CD4-positive, alpha-beta T cell (primary cell): ENCODE measurements at regions of chr9 and their contacts with region 1.

Region 1: GRCh38 chr9:99859243-99859980 is 37.7 kb downstream of the NR4A3 start:
- DNase-seq: no peak
- ATAC-seq: no peak
- H3K4me3 ChIP-seq: no peak overlapping the region
- H3K4me3 Mint-ChIP-seq: no peak overlapping the region
- H3K27ac ChIP-seq: no peak overlapping the region
- H3K27ac Mint-ChIP-seq: no peak overlapping the region
- H3K4me1 ChIP-seq: no peaks in the 10 kb centered on the region
- H3K4me1 Mint-ChIP-seq: no peaks in the 10 kb centered on the region
- H3K27me3 ChIP-seq: no peaks in the 10 kb centered on the region
- H3K27me3 Mint-ChIP-seq: no peaks in the 10 kb centered on the region
- CTCF ChIP-seq: no peak

Region 2: DNA sequence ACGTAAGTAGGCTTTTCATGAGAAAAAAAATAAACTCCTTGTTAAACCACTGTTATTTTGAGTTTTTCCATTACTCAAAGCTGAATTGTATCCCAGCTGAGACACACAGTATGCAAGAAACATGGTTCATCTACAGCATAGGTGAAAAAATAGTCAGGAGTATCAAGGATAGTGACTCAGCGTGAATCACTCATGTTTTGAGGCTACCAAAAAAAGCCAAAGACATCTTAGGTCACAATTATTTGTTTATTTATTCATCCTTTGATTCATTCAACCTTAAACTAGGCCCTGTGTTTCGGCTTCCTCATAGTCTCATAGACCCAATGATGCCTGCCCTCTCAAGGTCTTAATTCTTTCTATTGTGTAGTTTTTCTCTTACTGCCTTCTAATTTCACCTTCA is 14.1 kb after region 1 on chr9:
- CTCF ChIA-PET with region 1: no interaction called
- POLR2A ChIA-PET with region 1: no interaction called
- intact Hi-C with region 1: loop called in 1 of 2 experiments (anchors 2 kb)
- DNase-seq: no peak
- ATAC-seq: no peak
- H3K4me3 ChIP-seq: no peak overlapping the region
- H3K4me3 Mint-ChIP-seq: no peak overlapping the region
- H3K27ac ChIP-seq: no peak overlapping the region
- H3K27ac Mint-ChIP-seq: no peak overlapping the region
- H3K4me1 ChIP-seq: no peaks in the 10 kb centered on the region
- H3K4me1 Mint-ChIP-seq: no peaks in the 10 kb centered on the region
- H3K27me3 ChIP-seq: no peaks in the 10 kb centered on the region
- H3K27me3 Mint-ChIP-seq: peaks cover 8% of the 10 kb centered on the region
- CTCF ChIP-seq: no peak